ENCODE measurements at regions of chr2 and their contacts with region 1.

Region 1: DNA sequence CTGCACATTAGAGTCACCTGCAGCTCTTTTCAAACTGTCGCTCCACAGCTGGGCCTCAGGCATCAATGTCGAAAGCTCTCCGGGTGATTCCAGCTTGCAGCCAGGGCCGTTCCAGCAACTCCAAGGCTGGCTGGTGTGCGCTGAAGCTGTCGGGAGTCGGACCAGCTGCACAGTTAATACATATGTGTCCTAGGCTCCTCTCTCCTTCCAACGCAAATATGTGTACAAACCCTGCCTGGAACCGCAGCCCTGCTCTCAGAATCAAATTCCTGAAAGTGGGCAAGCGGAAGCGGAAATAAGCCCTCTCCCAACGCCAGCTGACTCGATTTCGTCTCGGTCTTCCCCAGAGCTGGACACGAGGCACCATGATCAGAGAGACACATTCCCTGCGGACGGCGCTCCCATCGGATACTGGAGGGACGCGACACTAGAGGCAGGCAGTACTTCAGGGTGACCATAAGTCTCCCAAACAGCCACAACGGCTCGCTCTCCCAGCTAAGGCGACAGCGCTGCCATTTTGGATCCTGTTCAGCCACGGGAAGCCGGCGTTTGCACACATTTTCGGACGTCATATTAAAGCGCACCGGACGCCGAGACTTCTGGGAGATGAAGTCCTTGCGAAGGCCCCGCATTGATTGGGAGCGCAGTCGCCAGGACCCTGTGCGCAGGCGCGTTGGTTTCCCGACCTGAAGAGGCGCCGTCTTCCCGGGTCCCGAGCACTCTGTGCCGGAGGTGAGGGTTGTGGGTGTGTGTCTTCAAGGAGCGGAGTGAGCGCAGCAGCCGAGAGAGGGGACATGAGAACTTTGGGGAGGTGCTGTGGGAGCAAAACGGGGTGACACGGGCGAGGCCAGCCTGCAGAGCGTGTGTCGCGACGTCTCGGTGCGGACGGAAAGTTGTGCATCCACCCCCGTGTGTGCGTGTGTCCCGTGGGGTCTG is at the start of gene ZNF2:
- DNase-seq: peak; percentile 98
- total RNA-seq, gene ZNF2: 4.1 TPM

Region 2: DNA sequence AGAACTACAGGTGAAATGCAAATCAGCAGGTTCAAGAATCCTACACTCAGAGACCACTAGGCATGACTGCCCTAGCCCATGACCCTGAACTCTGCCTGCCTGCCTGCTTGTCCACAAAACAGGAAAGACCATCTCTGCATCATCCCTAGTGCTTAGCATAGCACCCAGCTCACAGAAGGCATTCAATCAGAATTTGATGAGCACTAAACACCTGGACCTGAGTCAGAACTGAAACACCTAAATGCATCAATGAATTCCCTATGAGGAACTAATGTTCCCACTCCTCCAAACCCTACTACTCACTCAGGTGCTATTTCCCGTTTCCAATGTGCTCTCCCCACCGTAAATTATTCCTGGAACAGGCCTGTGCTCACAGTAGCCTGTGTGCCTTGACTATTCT is 65.5 kb before region 1 on chr2:
- intact Hi-C with region 1: no loop called
- DNase-seq: no peak

Region 3: DNA sequence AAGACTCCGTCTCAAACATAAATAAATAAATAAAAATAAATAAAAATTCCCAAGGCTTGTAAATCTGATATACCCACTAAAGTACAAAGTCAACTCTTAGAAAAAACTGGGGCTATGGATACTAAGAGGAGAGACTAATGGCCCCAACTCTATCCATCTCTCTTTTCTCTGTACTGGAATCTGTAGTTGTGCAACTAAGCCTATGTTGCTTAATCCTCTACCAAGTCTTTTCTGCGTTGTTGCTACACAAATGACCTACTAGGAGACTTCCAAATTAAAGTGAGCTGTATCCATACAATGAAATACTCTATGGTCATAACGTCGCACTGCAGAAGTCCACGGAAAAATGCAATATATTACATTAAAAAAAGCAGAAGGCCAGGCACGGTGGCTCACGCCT is 51.9 kb before region 1 on chr2:
- intact Hi-C with region 1: no loop called
- DNase-seq: no peak

Region 4: GRCh38 chr2:95207111-95207961 is 41.9 kb after region 1 on chr2 and contains the start of gene ZNF892:
- intact Hi-C with region 1: loop called (anchors 1 kb)
- DNase-seq: peak; percentile 96
- total RNA-seq, gene ZNF892: 4.8 TPM

Region 5: DNA sequence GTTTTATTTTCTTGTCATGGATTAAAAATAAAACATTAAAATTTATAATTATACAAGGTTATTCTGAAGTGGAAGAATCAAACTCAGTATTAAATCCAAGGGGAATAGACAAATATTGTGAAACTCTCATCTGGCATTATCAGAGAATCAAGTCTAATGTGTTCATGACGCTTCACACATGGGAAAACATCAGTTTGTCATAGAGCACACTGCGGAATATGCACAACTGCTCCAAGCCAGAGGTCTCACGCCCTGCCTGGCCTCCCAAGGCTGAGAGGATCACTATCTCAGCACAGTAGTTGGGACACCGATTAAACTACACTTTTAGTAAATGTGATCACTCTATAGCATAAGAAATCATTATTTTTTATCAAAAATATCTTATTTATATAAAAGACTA is 339.8 kb after region 1 on chr2:
- intact Hi-C with region 1: no loop called
- DNase-seq: no peak

Measured in cardiac septum (tissue), 1 donor.